ENCODE measurements at regions of chr21 and their contacts with region 1.

Region 1: GRCh38 chr21:33324291-33325221 is at the start of gene IFNAR1:
- DNase-seq: peak; percentile 80 to 92
- H3K4me3 ChIP-seq: peak within 1 kb of the TSS; percentile 97
- H3K27ac ChIP-seq: peak within 1 kb of the TSS; percentile 78
- H3K4me1 ChIP-seq: peaks cover 10% of the 10 kb centered on the region; the same call in 1 of the 2 replicates
- H3K27me3 ChIP-seq: no peaks in the 10 kb centered on the region
- CTCF ChIP-seq: no peak
- total RNA-seq, gene IFNAR1: 24.2 and 25.5 TPM in 2 replicates

Region 2: DNA sequence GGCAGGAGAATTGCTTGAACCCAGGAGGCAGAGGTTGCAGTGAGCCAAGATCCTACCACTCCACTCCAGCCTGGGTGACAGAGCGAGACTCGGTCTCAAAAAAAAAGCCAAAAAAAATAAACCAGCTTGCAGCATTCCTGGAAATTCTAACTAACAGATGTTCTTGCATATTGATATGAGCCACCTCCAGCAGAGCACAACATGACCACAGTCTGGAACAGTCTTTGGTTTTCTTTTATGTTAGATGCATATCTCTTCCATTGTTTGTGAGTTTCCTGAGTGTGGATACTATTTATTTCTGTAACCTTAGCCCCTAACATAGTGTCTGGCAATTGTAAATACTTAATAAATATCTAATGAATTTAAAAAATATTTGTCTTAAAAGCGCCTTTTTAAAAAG is 24.1 kb after region 1 on chr21:
- CTCF ChIA-PET with region 1: no interaction called
- POLR2A ChIA-PET with region 1: no interaction called
- intact Hi-C with region 1: no loop called
- DNase-seq: no peak
- H3K4me3 ChIP-seq: no peak overlapping the region
- H3K27ac ChIP-seq: no peak overlapping the region
- H3K4me1 ChIP-seq: no peaks in the 10 kb centered on the region
- H3K27me3 ChIP-seq: no peaks in the 10 kb centered on the region
- CTCF ChIP-seq: no peak

Region 3: GRCh38 chr21:33360881-33361602 is 36.5 kb after region 1 on chr21:
- CTCF ChIA-PET with region 1: interaction called, 11 read pairs
- POLR2A ChIA-PET with region 1: interaction called, 11 read pairs
- intact Hi-C with region 1: no loop called
- DNase-seq: peak in 1 of 2 experiments; percentile 66
- H3K4me3 ChIP-seq: no peak overlapping the region
- H3K27ac ChIP-seq: no peak overlapping the region
- H3K4me1 ChIP-seq: 0 out of 2 replicates have a peak, but pooled peaks cover 6% of the 10 kb centered on the region
- H3K27me3 ChIP-seq: no peaks in the 10 kb centered on the region
- CTCF ChIP-seq: peak; percentile 73